Activated T-helper 1 cell treated with anti-CD3 and anti-CD28 coated beads, Interleukin-12 subunit alpha, Interleukin-12 subunit beta, Interleukin-2, Interleukin-4 antibody, amounts not matched to agents 30 ng/mL and 10 ng/mL and 1 ng/mL, durations not matched to agents 14 hours and 24 hours and 36 hours (primary cell): ENCODE measurements at regions of chr3 and their contacts with region 1.

Region 1: DNA sequence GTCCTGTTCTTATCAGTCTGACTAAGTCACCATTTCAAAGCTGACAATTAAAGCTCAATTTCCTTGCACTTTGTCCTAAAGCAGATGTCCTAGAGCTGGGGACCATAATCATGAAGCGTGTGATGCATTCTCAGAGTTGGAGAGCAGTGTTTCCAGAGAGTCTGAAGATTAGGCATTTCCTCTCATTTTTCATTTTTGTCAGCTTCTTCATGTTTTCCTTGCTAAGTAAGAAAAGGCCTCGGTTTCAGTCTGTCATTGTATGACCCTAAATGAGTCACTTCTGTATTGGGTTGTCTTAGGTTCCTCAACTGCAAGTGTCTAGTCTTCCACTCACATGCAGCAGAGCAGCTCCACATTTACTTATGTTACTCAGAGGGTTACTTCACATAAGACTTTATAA is 257.2 kb upstream of the TPRG1 start:
- DNase-seq: no peak
- H3K4me3 Mint-ChIP-seq: peak overlapping the region; percentile 34
- H3K27ac Mint-ChIP-seq: peak overlapping the region; percentile 88
- H3K4me1 Mint-ChIP-seq: peaks cover 46% of the 10 kb centered on the region
- H3K27me3 Mint-ChIP-seq: no peaks in the 10 kb centered on the region

Region 2: DNA sequence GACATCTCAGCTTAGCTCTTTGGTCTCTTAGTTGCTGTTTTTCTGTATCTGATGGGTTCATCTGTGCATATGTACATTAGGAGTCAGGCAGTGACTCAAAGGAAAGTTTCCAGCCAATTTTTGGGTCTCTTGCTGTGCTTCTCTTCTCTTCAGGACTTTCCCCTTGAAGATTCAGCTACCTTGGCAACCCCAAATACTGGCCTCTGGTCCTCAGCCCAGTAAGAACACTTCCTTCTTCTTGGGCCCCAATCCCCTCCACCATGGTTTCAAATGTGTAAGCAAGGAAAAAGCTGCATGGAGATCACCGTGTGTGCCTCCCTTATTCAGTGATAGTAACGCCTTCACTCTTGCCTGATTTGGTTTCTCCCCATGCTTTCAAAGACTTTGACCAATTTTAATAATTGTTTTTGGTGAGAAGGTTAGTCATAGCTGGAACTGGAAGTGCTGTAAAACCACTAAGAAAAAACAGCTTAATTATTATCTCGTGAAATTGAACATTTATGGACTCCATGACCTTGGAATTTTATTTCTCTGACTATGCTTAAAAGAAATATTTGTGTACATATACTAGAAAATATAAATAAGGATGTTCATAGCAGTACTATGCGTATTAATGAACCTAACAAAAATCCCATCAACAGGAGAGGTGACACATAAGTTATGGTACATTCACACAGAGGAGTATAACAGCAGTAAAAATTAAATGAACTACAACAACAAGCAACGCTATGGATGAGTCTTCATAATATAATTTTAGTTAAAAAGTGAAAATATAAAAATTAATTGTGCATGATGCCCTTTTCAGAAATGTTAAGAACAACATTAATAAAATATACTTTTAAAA is 1044.0 kb before region 1 on chr3:
- intact Hi-C with region 1: loop called (anchors 2 kb)
- DNase-seq: no peak
- H3K4me3 Mint-ChIP-seq: peak overlapping the region; percentile 49
- H3K27ac Mint-ChIP-seq: peak overlapping the region; percentile 84
- H3K4me1 Mint-ChIP-seq: peaks cover 32% of the 10 kb centered on the region
- H3K27me3 Mint-ChIP-seq: no peaks in the 10 kb centered on the region

Region 3: GRCh38 chr3:188284455-188285212 is 629.9 kb before region 1 on chr3:
- intact Hi-C with region 1: loop called (anchors 1 kb)
- DNase-seq: peak; percentile 26
- H3K4me3 Mint-ChIP-seq: peak overlapping the region; percentile 57
- H3K27ac Mint-ChIP-seq: peak overlapping the region; percentile 90
- H3K4me1 Mint-ChIP-seq: peaks cover 55% of the 10 kb centered on the region
- H3K27me3 Mint-ChIP-seq: peaks cover 2% of the 10 kb centered on the region

Region 4: GRCh38 chr3:188389711-188390342 is 524.7 kb before region 1 on chr3:
- intact Hi-C with region 1: loop called (anchors 2 kb)
- DNase-seq: peak; percentile 33
- H3K4me3 Mint-ChIP-seq: peak overlapping the region; percentile 25
- H3K27ac Mint-ChIP-seq: peak overlapping the region; percentile 86
- H3K4me1 Mint-ChIP-seq: peaks cover 44% of the 10 kb centered on the region
- H3K27me3 Mint-ChIP-seq: peaks cover 1% of the 10 kb centered on the region

Region 5: GRCh38 chr3:188752850-188753249 is 161.7 kb before region 1 on chr3:
- intact Hi-C with region 1: loop called (anchors 1 kb)
- DNase-seq: no peak
- H3K4me3 Mint-ChIP-seq: no peak overlapping the region
- H3K27ac Mint-ChIP-seq: peak overlapping the region; percentile 60
- H3K4me1 Mint-ChIP-seq: peaks cover 33% of the 10 kb centered on the region
- H3K27me3 Mint-ChIP-seq: peaks cover 2% of the 10 kb centered on the region

Region 6: GRCh38 chr3:189132231-189132707 is 217.7 kb after region 1 on chr3:
- intact Hi-C with region 1: loop called (anchors 1 kb)
- DNase-seq: peak; percentile 75
- H3K4me3 Mint-ChIP-seq: peak overlapping the region; percentile 69
- H3K27ac Mint-ChIP-seq: peak overlapping the region; percentile 76
- H3K4me1 Mint-ChIP-seq: peaks cover 28% of the 10 kb centered on the region
- H3K27me3 Mint-ChIP-seq: no peaks in the 10 kb centered on the region